HEK293 (cell line): ENCODE measurements at regions of chr9 and their contacts with region 1.

Region 1: DNA sequence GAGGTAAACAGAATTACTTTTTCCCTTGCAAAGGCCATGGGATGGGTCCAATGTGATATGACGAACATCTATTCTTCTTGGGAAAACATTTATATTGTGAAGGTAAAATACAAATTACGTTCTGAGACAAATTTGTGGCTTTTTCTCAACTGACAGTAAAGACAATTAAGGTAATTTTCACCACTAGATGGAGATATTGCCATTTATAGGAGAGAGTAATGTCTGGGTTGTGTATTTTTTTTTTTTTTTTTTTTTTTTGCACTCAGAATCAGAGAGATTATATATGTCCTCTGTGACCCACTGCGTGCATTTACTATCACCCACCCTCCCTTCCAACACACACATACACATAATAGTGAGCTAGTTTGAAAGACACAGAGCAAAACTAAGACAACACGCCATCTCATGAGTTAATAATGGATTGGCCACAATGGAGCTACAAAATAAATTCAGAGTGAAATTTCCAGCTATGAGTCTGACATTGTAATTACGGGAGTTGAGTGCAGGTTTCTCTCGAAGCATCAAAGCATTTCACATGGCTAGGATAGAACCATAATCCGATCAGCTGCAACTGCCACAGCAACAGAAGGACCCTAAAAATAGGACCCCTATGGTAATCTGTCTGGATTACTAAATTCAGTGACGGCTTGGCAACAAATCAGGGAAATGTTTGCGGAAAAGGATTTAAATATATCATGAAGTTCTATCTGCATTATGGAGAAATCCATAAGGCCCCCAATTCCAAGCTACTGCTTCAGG is 49.2 kb downstream of the ANXA1 start:
- H3K4me3 ChIP-seq: no peak overlapping the region
- H3K27ac ChIP-seq: no peak overlapping the region
- H3K4me1 ChIP-seq: no peaks in the 10 kb centered on the region
- CTCF ChIP-seq: 0 out of 2 replicates have a peak, but pooled peaks have one; percentile 28

Region 2: DNA sequence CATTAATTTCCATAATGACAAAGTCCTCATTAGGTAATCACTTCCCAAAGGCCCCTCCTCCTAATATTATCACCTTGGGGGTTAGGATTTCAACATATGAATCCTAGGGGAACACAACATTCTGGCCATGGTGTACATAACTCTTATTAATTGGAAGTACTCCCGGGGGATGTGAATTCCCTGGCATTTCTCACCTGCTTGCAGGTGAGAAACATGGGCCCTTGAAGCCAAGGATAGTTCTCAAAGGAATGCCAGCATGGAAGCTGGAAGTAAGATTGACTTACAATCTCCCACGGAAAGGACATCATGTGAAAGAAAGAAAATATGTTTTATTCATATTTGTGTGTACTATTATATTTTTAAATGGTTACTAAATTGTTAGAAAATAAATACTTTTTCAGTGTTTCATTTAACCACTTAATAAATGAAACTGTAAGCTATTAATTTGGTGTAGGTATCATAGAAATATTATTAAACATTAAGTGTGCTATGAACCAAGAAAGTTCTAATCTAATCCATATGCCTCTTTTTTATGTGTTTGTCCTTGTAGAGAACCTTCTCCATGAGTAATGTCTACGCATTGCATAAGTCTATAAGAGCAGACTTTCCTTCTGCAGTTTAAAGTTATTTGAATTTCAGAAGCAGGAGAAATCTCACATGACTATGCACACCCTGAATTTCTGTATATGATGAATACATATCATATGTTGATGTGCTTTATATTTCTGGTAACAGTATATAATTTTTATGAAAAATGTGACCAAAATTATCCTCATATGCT is 10.2 kb after region 1 on chr9:
- CTCF ChIA-PET with region 1: interaction called, 16 read pairs
- POLR2A ChIA-PET with region 1: no interaction called
- H3K4me3 ChIP-seq: no peak overlapping the region
- H3K27ac ChIP-seq: no peak overlapping the region
- H3K4me1 ChIP-seq: no peaks in the 10 kb centered on the region
- CTCF ChIP-seq: no peak

Region 3: GRCh38 chr9:73565833-73566465 is 365.1 kb after region 1 on chr9:
- CTCF ChIA-PET with region 1: interaction called, 10 read pairs
- POLR2A ChIA-PET with region 1: no interaction called
- H3K4me3 ChIP-seq: no peak overlapping the region
- H3K27ac ChIP-seq: no peak overlapping the region
- H3K4me1 ChIP-seq: no peaks in the 10 kb centered on the region
- CTCF ChIP-seq: no peak